Thyroid gland (tissue), 4 donors: ENCODE measurements at regions of chr1 and their contacts with region 1.

Region 1: DNA sequence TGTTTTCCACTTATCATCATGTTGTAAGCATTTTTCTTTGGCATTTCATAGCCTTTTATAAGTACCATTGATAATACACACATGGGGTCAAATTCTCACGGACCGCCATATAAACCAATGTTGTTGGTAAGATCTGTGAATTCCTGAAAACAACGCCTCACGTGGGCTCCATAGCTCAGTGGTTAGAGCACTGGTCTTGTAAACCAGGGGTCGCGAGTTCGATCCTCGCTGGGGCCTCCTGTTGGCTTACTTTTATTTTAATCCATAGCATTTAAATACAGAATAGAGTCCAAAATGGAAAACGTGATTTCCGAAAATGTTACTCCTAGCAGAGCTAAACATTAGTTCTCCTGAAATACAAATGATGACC is 83.1 kb downstream of the HHIPL2 start:
- DNase-seq: peak; percentile 53 to 54
- H3K4me3 ChIP-seq: peak overlapping the region in 1 of 3 donors; percentile 16
- H3K27ac ChIP-seq: peak overlapping the region in 2 of 3 donors; percentile 80 to 87
- H3K4me1 ChIP-seq: no peaks in the 10 kb centered on the region
- H3K27me3 ChIP-seq: no peaks in the 10 kb centered on the region
- CTCF ChIP-seq: no peak
- POLR2A ChIP-seq: no peak

Region 2: GRCh38 chr1:222634180-222635013 is 169.6 kb after region 1 on chr1:
- intact Hi-C with region 1: loop called (anchors 5 kb)
- DNase-seq: peak; percentile 53 to 60
- H3K4me3 ChIP-seq: no peak overlapping the region
- H3K27ac ChIP-seq: no peak overlapping the region
- H3K4me1 ChIP-seq: no peaks in the 10 kb centered on the region
- H3K27me3 ChIP-seq: no peaks in the 10 kb centered on the region
- CTCF ChIP-seq: peak; percentile 84 to 86 (median 85)
- POLR2A ChIP-seq: no peak